Transverse colon (tissue), 4 donors: ENCODE measurements at regions of chr9 and their contacts with region 1.

Region 1: DNA sequence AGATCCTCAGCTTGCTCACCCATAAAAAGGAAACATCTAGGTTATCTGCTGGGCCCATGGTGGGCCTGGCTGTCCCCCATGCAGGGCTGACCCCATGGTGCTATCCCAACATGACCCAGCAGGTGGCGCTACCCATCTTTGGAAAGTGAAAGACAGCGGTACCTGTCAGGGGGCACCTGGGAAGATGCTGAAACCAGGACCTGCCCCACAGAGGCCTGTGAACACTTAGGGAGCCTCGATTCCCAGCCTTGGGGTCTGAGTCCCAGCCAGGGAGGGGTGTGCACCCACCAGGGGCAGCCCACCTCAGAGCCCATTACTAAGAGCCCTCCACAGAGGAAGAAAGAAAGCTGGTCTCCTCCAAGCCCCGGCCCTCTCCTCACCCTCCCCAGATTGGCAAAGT is 46.6 kb upstream of the IPPK start:
- DNase-seq: peak; percentile 80
- H3K4me3 ChIP-seq: no peak overlapping the region
- H3K27ac ChIP-seq: no peak overlapping the region
- H3K4me1 ChIP-seq: peaks cover 0 to 18% (median 6%) of the 10 kb centered on the region in 4 donors
- H3K27me3 ChIP-seq: no peaks in the 10 kb centered on the region
- CTCF ChIP-seq: peak; percentile 90 to 94 (median 91)
- EP300 ChIP-seq: no peak
- POLR2A ChIP-seq: no peak

Region 2: GRCh38 chr9:92781923-92782322 is 65.4 kb after region 1 on chr9:
- in situ Hi-C with region 1: loop called in 1 of 4 experiments (anchors 5 kb)
- intact Hi-C with region 1: no loop called
- DNase-seq: no peak
- H3K4me3 ChIP-seq: no peak overlapping the region
- H3K27ac ChIP-seq: no peak overlapping the region
- H3K4me1 ChIP-seq: no peaks in the 10 kb centered on the region
- H3K27me3 ChIP-seq: peaks cover 8% of the 10 kb centered on the region
- CTCF ChIP-seq: no peak
- EP300 ChIP-seq: no peak
- POLR2A ChIP-seq: no peak